ENCODE measurements at regions of chr17 and their contacts with region 1.

Region 1: GRCh38 chr17:35534576-35535093 is 2.8 kb downstream of the SLFN12L start:
- DNase-seq: no peak
- ATAC-seq: no peak
- H3K4me3 ChIP-seq: no peak overlapping the region
- H3K27ac ChIP-seq: no peak overlapping the region
- H3K4me1 ChIP-seq: no peaks in the 10 kb centered on the region
- H3K27me3 ChIP-seq: no peaks in the 10 kb centered on the region
- CTCF ChIP-seq: no peak

Region 2: GRCh38 chr17:35560703-35561102 is 26.1 kb after region 1 on chr17 and contains the start of gene SLFN14:
- CTCF ChIA-PET with region 1: interaction called, 13 read pairs
- POLR2A ChIA-PET with region 1: interaction called, 7 read pairs
- in situ Hi-C with region 1: no loop called
- intact Hi-C with region 1: no loop called
- DNase-seq: no peak
- ATAC-seq: no peak
- H3K4me3 ChIP-seq: no peak within 1 kb of the TSS
- H3K27ac ChIP-seq: no peak within 1 kb of the TSS
- H3K4me1 ChIP-seq: no peaks in the 10 kb centered on the region
- H3K27me3 ChIP-seq: no peaks in the 10 kb centered on the region
- CTCF ChIP-seq: no peak
- total RNA-seq, gene SLFN14: not detected

Region 3: GRCh38 chr17:35726127-35726952 is 191.7 kb after region 1 on chr17:
- CTCF ChIA-PET with region 1: no interaction called
- POLR2A ChIA-PET with region 1: no interaction called
- in situ Hi-C with region 1: no loop called
- intact Hi-C with region 1: no loop called
- DNase-seq: no peak
- ATAC-seq: no peak
- H3K4me3 ChIP-seq: no peak overlapping the region
- H3K27ac ChIP-seq: no peak overlapping the region
- H3K4me1 ChIP-seq: peaks cover 11% of the 10 kb centered on the region
- H3K27me3 ChIP-seq: no peaks in the 10 kb centered on the region
- CTCF ChIP-seq: no peak

Region 4: GRCh38 chr17:35889818-35890763 is 355.5 kb after region 1 on chr17:
- CTCF ChIA-PET with region 1: no interaction called
- POLR2A ChIA-PET with region 1: no interaction called
- in situ Hi-C with region 1: no loop called
- intact Hi-C with region 1: no loop called
- DNase-seq: no peak
- ATAC-seq: peak; percentile 65; the same call in 1 of the 2 replicates
- H3K4me3 ChIP-seq: no peak overlapping the region
- H3K27ac ChIP-seq: no peak overlapping the region
- H3K4me1 ChIP-seq: peaks cover 7% of the 10 kb centered on the region; the same call in 1 of the 2 replicates
- H3K27me3 ChIP-seq: no peaks in the 10 kb centered on the region
- CTCF ChIP-seq: no peak

Measured in Panc1 (cell line).